ENCODE measurements at regions of chr6 and their contacts with region 1.

Region 1: GRCh38 chr6:32413427-32414047 is 6.6 kb upstream of the BTNL2 start:
- DNase-seq: peak; percentile 92
- H3K4me3 Mint-ChIP-seq: no peak overlapping the region
- H3K27ac Mint-ChIP-seq: no peak overlapping the region
- H3K4me1 Mint-ChIP-seq: peaks cover 2% of the 10 kb centered on the region
- H3K27me3 Mint-ChIP-seq: peaks cover 29% of the 10 kb centered on the region

Region 2: GRCh38 chr6:31971993-31972708 is 441.4 kb before region 1 on chr6 and contains the start of gene DXO:
- CTCF ChIA-PET with region 1: no interaction called
- intact Hi-C with region 1: no loop called
- DNase-seq: peak; percentile 99
- H3K4me3 Mint-ChIP-seq: peak within 1 kb of the TSS; percentile 98
- H3K27ac Mint-ChIP-seq: peak within 1 kb of the TSS; percentile 100
- H3K4me1 Mint-ChIP-seq: peaks cover 41% of the 10 kb centered on the region
- H3K27me3 Mint-ChIP-seq: no peaks in the 10 kb centered on the region
- total RNA-seq, gene DXO: 12.5 to 13.0 TPM

Region 3: DNA sequence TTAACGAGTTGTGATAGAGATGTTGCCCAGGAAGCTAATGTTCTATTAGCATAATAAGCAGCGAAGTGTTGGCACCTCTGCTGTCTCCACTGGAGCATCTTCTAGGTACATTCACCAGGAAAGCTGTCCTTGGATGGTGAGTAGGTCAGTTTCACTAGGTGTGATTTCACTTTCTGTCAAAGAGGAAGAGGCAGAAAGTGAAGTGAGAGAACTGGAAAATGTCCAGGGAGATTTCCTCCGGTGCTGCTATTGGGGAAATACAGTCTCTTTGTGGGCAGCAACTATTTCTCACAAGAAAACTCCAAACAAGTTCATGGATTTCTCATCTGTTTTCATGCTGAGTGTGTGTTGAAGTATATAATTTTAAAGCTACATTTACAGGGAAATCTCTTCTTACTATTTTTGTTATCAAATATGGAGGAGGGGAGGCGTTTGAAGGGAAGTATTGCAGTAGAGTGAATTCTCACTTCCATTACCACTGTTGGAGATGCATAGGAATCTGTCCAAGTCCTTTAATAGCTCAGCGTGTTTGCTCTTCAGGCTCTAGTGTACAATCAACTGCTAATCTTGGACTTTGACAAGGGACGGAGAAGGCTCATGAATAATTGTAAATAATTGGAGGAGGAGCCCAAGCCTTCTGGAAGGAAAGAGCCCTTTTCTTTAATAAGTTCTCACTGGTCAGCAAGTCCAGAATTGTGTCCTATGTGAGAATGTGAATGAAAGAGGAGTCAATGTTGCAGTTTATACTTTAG is 25.8 kb before region 1 on chr6:
- CTCF ChIA-PET with region 1: no interaction called
- intact Hi-C with region 1: no loop called
- DNase-seq: no peak
- H3K4me3 Mint-ChIP-seq: no peak overlapping the region
- H3K27ac Mint-ChIP-seq: no peak overlapping the region
- H3K4me1 Mint-ChIP-seq: no peaks in the 10 kb centered on the region
- H3K27me3 Mint-ChIP-seq: peaks cover 14% of the 10 kb centered on the region

Region 4: GRCh38 chr6:32402812-32403211 is 10.7 kb before region 1 on chr6:
- CTCF ChIA-PET with region 1: interaction called, 11 read pairs
- intact Hi-C with region 1: no loop called
- DNase-seq: no peak
- H3K4me3 Mint-ChIP-seq: no peak overlapping the region
- H3K27ac Mint-ChIP-seq: no peak overlapping the region
- H3K4me1 Mint-ChIP-seq: no peaks in the 10 kb centered on the region
- H3K27me3 Mint-ChIP-seq: peaks cover 17% of the 10 kb centered on the region

Region 5: GRCh38 chr6:32472781-32473375 is 59.3 kb after region 1 on chr6:
- CTCF ChIA-PET with region 1: no interaction called
- intact Hi-C with region 1: no loop called
- DNase-seq: no peak
- H3K4me3 Mint-ChIP-seq: no peak overlapping the region
- H3K27ac Mint-ChIP-seq: no peak overlapping the region
- H3K4me1 Mint-ChIP-seq: no peaks in the 10 kb centered on the region
- H3K27me3 Mint-ChIP-seq: peaks cover 15% of the 10 kb centered on the region

Region 6: GRCh38 chr6:32501016-32501415 is 87.5 kb after region 1 on chr6:
- CTCF ChIA-PET with region 1: no interaction called
- intact Hi-C with region 1: no loop called
- DNase-seq: no peak
- H3K4me3 Mint-ChIP-seq: no peak overlapping the region
- H3K27ac Mint-ChIP-seq: no peak overlapping the region
- H3K4me1 Mint-ChIP-seq: no peaks in the 10 kb centered on the region
- H3K27me3 Mint-ChIP-seq: no peaks in the 10 kb centered on the region

Region 7: GRCh38 chr6:32692019-32692418 is 278.5 kb after region 1 on chr6:
- CTCF ChIA-PET with region 1: interaction called, 9 read pairs
- intact Hi-C with region 1: loop called (anchors 1 kb)
- DNase-seq: peak; percentile 81
- H3K4me3 Mint-ChIP-seq: no peak overlapping the region
- H3K27ac Mint-ChIP-seq: no peak overlapping the region
- H3K4me1 Mint-ChIP-seq: peaks cover 3% of the 10 kb centered on the region
- H3K27me3 Mint-ChIP-seq: peaks cover 9% of the 10 kb centered on the region

Region 8: DNA sequence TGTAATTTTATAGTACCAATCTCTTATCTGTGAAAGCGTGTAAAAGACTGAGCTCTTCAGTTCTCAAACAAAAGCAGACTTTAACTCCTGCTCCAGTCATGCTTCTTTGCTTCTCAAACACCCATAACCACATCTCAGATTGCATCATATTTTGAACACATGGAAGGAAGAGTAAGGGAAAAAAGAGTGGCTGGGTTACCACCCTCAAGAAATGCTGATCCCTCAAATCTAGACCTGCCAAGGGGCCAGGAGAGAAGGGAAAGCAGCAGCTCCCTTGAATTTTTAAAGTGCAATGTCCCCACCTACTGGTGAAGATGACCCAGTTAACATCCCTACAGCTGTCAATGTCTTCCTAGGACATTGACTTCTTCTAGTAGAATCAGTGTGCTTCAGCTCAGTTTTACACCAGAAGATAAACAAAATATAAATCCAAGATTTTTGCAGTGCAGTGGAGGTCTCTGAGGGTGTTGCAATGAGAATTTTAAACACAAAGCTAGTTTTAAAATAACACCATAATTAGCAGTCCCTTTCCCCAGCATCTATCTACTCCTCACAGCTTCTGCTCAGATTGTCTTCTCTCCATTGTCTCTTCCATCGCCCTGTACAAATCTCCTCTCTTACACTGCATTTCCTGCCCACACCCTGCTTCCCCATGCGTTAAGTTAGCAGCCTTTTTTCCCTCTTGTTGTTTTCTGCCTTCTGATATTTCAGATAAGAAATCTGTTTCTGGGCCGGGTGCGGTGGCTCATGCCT is 372.4 kb after region 1 on chr6:
- CTCF ChIA-PET with region 1: interaction called, 18 read pairs
- intact Hi-C with region 1: loop called (anchors 1 kb)
- DNase-seq: peak; percentile 49
- H3K4me3 Mint-ChIP-seq: no peak overlapping the region
- H3K27ac Mint-ChIP-seq: no peak overlapping the region
- H3K4me1 Mint-ChIP-seq: no peaks in the 10 kb centered on the region
- H3K27me3 Mint-ChIP-seq: peaks cover 13% of the 10 kb centered on the region